ENCODE measurements at regions of chr11 and their contacts with region 1.

Region 1: GRCh38 chr11:17730608-17731462 is 3.7 kb upstream of the KCNC1 start:
- DNase-seq: peak; percentile 76 to 99 (median 87)
- H3K4me3 ChIP-seq: no peak overlapping the region
- H3K27ac ChIP-seq: peak overlapping the region in 5 of 59 donors; percentile 3 to 61 (median 50)
- H3K27me3 ChIP-seq: peaks cover 0 to 10% (median 2%) of the 10 kb centered on the region in 45 donors
- CTCF ChIP-seq: peak; percentile 59 to 94 (median 86)

Region 2: DNA sequence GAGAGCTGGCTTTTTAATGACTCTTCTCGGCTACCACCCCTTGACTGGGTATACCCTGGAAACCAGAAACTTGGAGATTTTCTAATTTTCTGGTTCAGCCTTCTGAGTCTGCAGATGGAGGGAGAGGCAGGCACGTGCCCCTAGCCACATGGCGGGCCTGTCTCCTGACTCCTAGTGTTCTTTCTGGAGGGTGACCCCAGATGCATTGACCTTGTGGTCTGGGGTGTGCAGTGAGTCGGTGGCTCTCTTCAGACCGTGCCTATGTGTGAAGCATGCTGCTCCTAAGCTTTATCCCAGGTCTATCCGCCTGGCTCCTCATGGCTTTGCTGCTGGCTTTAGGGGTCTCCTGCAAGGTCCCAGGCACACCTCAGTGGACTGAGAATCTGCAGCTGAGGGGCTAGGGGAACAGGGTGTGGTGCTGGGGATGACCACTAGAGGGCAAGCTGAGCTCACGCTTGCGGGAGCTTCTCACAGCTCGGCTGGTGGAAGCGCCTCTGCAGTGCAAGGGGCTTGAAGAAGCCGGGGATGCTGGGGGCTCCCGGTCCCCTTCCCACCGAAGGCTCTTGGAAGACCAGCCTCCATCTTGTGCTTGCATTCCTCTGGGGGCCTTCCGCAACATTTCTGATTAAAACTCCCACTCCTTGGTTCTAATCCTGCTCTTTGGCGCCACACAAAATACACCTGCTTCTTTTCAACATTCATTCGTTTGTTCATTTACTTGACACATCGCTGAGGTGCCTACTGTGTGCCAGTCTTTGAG is 132.0 kb before region 1 on chr11:
- intact Hi-C with region 1: loop called in 1 of 2 experiments (anchors 2 kb)
- DNase-seq: peak; percentile 70 to 89 (median 80)
- H3K4me3 ChIP-seq: no peak overlapping the region
- H3K27ac ChIP-seq: no peak overlapping the region
- H3K27me3 ChIP-seq: peaks cover 0 to 2% (median 0%) of the 10 kb centered on the region in 45 donors
- CTCF ChIP-seq: peak; percentile 54 to 97 (median 92)

Region 3: GRCh38 chr11:17658211-17658610 is 72.6 kb before region 1 on chr11:
- intact Hi-C with region 1: no loop called
- DNase-seq: no peak
- H3K4me3 ChIP-seq: no peak overlapping the region
- H3K27ac ChIP-seq: no peak overlapping the region
- H3K27me3 ChIP-seq: peaks cover 0 to under 1% (median 0%) of the 10 kb centered on the region in 45 donors
- CTCF ChIP-seq: no peak

Region 4: GRCh38 chr11:17839973-17840611 is 109.3 kb after region 1 on chr11:
- intact Hi-C with region 1: loop called (anchors 5 to 10 kb)
- DNase-seq: peak in 5 of 10 donors; percentile 40 to 73 (median 47)
- H3K4me3 ChIP-seq: no peak overlapping the region
- H3K27ac ChIP-seq: peak overlapping the region in 34 of 59 donors; percentile 2 to 75 (median 48)
- H3K27me3 ChIP-seq: no peaks in the 10 kb centered on the region
- CTCF ChIP-seq: no peak

Region 5: GRCh38 chr11:17846852-17847453 is 116.1 kb after region 1 on chr11:
- intact Hi-C with region 1: loop called in 1 of 2 experiments (anchors 5 kb)
- DNase-seq: peak in 7 of 10 donors; percentile 30 to 71 (median 50)
- H3K4me3 ChIP-seq: no peak overlapping the region
- H3K27ac ChIP-seq: peak overlapping the region in 38 of 59 donors; percentile 7 to 85 (median 51)
- H3K27me3 ChIP-seq: no peaks in the 10 kb centered on the region
- CTCF ChIP-seq: peak in 41 of 56 donors; percentile 10 to 55 (median 33)

Region 6: GRCh38 chr11:17978553-17979287 is 247.9 kb after region 1 on chr11:
- intact Hi-C with region 1: loop called (anchors 1 to 2 kb)
- DNase-seq: peak; percentile 53 to 88 (median 66)
- H3K4me3 ChIP-seq: no peak overlapping the region
- H3K27ac ChIP-seq: peak overlapping the region in 9 of 59 donors; percentile 15 to 61 (median 36)
- H3K27me3 ChIP-seq: no peaks in the 10 kb centered on the region
- CTCF ChIP-seq: peak; percentile 45 to 90 (median 78)

Measured in dorsolateral prefrontal cortex (tissue), 120 donors.